ENCODE measurements at regions of chr11 and their contacts with region 1.

Region 1: GRCh38 chr11:61733120-61733978 is 19.1 kb upstream of the MYRF start:
- DNase-seq: no peak
- H3K4me3 ChIP-seq: no peak overlapping the region
- CTCF ChIP-seq: peak; percentile 99

Region 2: DNA sequence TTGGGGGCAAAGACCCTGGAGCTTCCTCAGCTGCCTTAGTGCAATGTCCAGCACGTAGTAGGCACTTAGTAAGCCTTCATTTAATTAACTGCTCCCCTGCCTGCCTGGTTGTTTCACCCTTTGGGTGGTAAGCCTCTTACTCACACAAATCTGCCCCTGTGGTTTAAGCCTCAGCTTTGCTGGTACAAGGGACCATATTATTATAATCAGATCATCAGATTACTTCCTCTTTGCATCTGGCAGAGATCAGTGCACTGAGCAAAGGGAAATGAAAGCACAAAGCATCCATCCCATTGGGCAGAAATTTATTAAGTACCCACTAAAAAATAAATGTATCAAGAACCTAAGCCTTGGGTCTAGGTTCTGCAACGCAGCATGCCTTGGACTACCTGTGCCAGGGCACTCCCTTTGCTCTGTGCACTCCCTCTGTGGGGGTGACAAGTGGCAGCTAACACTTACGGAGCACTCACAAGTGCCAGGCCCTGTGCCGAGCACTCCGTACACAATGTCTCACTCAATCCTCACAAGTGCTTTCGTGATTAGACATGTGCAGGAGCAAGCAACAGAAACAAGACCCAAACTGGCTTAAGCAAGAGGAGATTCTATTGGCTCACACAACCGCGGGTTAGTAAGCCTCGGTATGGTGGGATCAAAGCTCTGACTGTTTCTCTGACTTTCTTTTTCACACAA is 88.0 kb before region 1 on chr11:
- CTCF ChIA-PET with region 1: interaction called, 30 read pairs
- POLR2A ChIA-PET with region 1: no interaction called
- DNase-seq: no peak
- H3K4me3 ChIP-seq: no peak overlapping the region
- CTCF ChIP-seq: no peak

Region 3: DNA sequence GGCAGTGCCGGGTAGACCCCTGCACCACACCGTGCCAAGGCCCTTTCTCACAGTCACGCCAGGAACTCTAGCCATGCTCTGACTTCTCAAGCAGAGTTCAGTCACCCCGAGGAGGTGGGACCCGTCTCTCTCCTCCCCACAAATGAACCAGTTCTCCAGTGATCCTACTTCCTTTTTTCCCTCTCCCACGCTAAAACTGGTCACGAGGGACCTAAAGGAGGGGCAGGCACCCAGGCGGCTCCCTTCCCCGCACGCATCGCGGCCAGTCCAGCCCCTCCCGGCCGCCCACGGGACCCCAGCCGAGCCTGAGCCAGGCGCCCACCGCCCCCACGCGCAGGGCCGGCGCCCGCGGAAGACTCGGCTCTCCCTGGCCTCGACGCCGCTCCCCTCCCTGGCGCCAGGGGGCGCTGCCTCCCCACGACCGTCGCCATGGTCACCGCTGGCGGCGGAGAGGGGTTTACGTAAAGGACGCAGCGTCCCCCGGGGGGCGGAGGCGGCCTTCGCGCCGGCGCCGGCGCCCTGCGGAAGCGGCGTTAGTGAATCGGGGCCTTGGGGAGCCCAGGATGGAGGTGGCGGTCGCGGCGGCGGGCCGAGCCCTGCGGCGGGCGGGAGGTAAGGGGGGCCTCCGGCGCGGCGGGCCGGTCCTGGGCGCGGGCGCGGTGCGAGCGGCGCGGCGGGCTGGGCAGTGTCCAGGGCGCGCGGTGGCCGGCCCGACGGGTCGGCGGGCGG is 53.3 kb before region 1 on chr11 and contains the start of gene DAGLA:
- CTCF ChIA-PET with region 1: interaction called, 40 read pairs
- POLR2A ChIA-PET with region 1: no interaction called
- DNase-seq: no peak
- H3K4me3 ChIP-seq: peak within 1 kb of the TSS; percentile 68
- CTCF ChIP-seq: peak; percentile 96

Region 4: DNA sequence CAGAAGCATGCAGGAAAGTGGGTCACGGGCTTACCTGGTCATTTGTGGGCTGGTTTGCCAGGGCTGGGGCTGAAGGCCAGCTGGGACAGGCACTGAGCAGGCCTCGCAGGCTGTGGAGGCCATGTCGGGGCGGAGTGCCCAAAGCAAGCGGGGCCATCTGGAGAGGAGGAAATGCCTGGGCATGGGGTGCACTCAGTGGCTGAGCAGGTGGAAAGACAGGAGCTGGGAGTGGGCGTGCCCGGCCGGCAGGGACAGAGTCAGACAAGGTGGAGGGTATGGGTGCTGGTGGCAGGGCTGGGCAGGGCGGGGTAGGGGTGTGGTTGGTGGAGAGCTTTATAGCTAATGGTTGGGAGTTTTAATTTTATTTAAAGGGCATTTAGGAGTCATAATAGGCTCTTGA is 25.8 kb before region 1 on chr11:
- CTCF ChIA-PET with region 1: interaction called, 12 read pairs
- POLR2A ChIA-PET with region 1: no interaction called
- DNase-seq: no peak
- H3K4me3 ChIP-seq: no peak overlapping the region
- CTCF ChIP-seq: no peak

Region 5: GRCh38 chr11:61718621-61719302 is 14.6 kb before region 1 on chr11:
- CTCF ChIA-PET with region 1: interaction called, 116 read pairs
- POLR2A ChIA-PET with region 1: no interaction called
- DNase-seq: no peak
- H3K4me3 ChIP-seq: peak overlapping the region; percentile 67
- CTCF ChIP-seq: no peak

Region 6: DNA sequence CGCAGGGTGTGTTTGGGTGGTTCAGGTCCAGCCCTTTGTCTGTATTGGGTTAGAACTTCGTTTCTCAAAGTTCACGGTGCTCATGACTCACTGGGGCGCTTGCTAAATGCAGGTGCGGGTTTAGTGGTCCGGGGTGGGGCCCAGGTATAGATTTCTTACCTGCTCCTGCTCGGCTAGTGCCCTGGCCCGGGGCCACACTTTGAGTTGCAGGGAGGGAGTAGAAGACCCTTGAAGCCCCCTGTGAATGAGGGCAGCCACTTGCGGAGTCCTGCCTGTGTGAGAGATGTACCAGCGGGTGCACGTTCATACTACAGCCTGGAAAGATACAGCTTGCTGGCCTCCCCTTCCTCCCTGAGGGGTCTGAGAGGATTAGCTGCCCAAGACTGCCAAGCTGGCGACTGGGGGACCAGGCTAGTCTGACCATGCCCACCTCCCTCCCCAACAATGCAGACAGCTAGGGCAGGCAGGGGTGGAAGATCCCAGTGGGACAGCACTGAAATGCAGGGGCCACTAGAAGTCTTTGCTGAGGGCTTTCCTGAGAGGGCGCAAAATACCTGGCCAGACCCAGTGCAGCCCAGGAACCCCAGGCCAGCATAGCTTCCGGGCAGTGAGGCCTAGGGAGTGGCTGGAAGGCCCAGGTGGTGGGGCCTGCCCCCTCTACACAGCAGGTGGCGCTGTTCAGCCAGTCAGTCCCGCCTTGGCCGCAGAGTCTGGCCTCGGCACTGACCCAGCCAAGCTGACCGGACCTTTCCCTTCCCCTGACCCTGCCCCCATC is 14.0 kb after region 1 on chr11:
- CTCF ChIA-PET with region 1: interaction called, 140 read pairs
- POLR2A ChIA-PET with region 1: no interaction called
- DNase-seq: no peak
- H3K4me3 ChIP-seq: no peak overlapping the region
- CTCF ChIP-seq: peak; percentile 97

Region 7: GRCh38 chr11:61756452-61757212 is 23.3 kb after region 1 on chr11:
- CTCF ChIA-PET with region 1: interaction called, 140 read pairs
- POLR2A ChIA-PET with region 1: no interaction called
- DNase-seq: no peak
- H3K4me3 ChIP-seq: no peak overlapping the region
- CTCF ChIP-seq: no peak

Measured in AG04449 (cell line).